ENCODE measurements at regions of chr12 and their contacts with region 1.

Region 1: DNA sequence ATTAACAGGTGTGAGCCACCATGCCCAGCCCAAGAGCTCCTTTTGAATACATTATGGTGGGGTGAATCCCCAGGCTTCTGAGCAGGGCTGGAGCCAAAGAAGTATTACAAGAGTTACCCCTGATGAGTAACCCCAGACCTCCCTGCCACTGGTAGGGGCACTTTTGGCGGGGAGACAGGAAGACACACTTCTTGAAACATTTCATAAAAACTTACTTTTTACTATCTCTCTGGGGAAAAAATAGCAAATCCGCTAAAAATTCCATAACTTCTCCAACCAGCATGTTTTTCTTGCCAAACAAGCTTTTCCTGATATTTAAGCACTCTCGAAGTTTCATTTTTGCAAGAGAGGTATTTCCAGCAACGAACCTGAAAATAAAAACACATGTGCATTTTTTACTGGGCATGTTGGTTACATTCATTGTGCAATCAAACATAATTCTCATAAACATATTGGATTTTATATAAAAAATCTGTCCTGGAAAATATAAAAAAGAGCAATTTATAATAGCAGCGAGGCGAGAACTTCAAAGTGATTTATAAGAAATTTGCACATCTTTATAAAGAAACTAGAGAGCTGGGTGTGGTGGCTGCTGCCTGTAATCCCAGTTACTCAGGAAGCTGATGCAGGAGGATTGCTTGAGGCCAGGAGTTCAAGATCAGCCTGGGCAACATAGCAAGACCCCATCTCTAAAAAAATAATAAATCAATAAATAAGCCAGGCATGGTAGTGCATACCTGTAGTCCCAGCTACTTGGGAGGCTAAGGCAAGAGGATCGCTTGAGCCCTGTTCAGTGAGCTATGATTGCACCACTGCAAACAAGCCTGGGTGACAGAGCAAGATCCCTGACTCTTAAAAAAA is 20.1 kb upstream of the NT5DC3 start:
- DNase-seq: no peak
- ATAC-seq: no peak
- H3K4me3 ChIP-seq: no peak overlapping the region
- H3K4me1 ChIP-seq: peaks cover 6% of the 10 kb centered on the region
- CTCF ChIP-seq: no peak

Region 2: GRCh38 chr12:103799870-103800771 is 61.0 kb before region 1 on chr12:
- intact Hi-C with region 1: loop called in 1 of 2 experiments (anchors 10 kb)
- DNase-seq: peak; percentile 52 to 65 (median 53)
- ATAC-seq: peak; percentile 87
- H3K4me3 ChIP-seq: no peak overlapping the region
- H3K4me1 ChIP-seq: peaks cover 18% of the 10 kb centered on the region
- CTCF ChIP-seq: no peak

Measured in mucosa of descending colon (tissue), 3 donors.